ENCODE measurements at regions of chr12 and their contacts with region 1.

Region 1: GRCh38 chr12:93025145-93025805 is 96.2 kb upstream of the EEA1 start:
- DNase-seq: no peak
- ATAC-seq: peak; percentile 60 to 90 (median 70)
- H3K4me3 ChIP-seq: no peak overlapping the region
- H3K27ac ChIP-seq: no peak overlapping the region
- H3K4me1 ChIP-seq: peaks cover 6% of the 10 kb centered on the region
- H3K27me3 ChIP-seq: no peaks in the 10 kb centered on the region
- CTCF ChIP-seq: peak; percentile 55

Region 2: DNA sequence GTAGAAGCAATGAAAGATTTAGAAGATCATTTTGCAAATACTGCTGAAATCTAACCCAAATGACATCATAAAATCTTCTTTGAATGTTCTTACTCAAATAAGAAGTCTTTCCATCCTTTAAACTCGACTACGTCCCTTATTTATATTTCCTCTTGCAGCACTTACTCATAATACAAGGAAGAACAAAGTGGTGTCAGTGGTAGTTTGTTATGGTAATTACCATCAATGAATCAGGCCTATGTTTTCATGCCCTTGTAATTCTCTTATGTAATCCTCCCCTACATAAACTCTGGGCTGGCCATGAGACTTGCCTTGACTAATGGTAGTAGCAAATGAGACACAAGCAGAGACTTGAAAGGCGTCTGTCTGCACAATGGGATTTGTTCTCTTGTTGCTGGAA is 113.2 kb before region 1 on chr12:
- intact Hi-C with region 1: no loop called
- DNase-seq: no peak
- ATAC-seq: peak; percentile 66 to 82 (median 70)
- H3K4me3 ChIP-seq: no peak overlapping the region
- H3K27ac ChIP-seq: no peak overlapping the region
- H3K4me1 ChIP-seq: peaks cover 42% of the 10 kb centered on the region
- H3K27me3 ChIP-seq: no peaks in the 10 kb centered on the region
- CTCF ChIP-seq: no peak

Region 3: DNA sequence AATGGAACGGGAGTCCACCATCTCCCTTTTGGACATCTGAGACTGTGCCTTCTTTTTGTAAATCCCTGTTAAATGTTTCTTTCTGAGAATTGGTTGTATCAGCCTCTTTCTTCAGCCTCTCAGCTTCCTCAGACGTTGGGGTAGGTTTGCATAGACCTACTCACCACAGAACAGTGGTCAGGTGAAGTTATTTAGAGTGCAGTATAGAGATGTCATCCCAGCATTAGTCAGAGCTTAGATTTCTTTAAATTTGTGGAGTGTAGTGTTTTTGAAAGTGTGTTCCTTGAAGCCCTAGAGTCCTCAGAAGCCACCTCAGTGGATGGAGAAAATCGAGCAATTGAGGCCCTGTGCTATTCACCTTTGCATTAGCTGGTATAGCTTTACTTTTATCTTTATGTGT is 87.3 kb before region 1 on chr12:
- intact Hi-C with region 1: no loop called
- DNase-seq: no peak
- ATAC-seq: no peak
- H3K4me3 ChIP-seq: no peak overlapping the region
- H3K27ac ChIP-seq: no peak overlapping the region
- H3K4me1 ChIP-seq: no peaks in the 10 kb centered on the region
- H3K27me3 ChIP-seq: no peaks in the 10 kb centered on the region
- CTCF ChIP-seq: no peak

Region 4: DNA sequence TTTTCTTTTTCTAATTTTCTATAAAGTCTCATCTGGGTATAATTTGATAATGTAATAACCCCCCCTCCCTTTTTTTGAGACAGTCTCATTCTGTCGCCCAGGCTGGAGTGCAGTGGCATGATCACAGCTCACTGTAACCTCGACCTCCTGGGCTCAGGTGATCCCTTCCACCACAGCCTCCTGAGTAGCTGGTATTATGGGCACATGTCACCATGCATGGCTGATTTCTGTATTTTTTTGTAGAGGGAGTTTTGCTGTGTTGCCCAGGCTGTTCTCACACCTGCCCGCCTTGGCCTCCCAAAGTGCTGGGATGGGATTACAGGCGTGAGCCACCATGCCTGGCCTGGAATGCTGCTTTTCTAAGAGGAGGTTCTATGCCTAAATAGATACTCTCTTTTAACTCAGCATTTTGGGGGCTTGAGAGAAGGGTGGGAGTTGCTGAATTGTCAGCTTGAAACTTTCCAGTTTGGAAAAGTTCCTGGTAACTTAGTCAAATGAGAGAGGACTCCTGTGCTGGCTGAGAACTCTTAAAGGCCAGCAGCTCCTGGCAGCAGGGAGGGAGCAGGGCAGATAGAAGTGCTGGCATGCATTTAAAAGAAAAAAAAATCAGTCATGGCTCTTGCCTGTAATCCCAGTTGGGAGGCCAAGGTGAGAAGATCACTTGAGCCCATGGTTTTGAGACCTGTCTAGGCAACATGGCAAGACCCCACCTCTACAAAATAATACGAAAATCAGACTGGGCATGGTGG is 365.4 kb after region 1 on chr12:
- intact Hi-C with region 1: loop called in 1 of 2 experiments (anchors 10 kb)
- DNase-seq: no peak
- ATAC-seq: peak in 1 of 4 donors; percentile 29
- H3K4me3 ChIP-seq: no peak overlapping the region
- H3K27ac ChIP-seq: peak overlapping the region; percentile 55
- H3K4me1 ChIP-seq: peaks cover 64% of the 10 kb centered on the region
- H3K27me3 ChIP-seq: no peaks in the 10 kb centered on the region
- CTCF ChIP-seq: no peak

Region 5: GRCh38 chr12:93407054-93407962 is 382.0 kb after region 1 on chr12:
- intact Hi-C with region 1: no loop called
- DNase-seq: no peak
- ATAC-seq: peak in 1 of 4 donors; percentile 26
- H3K4me3 ChIP-seq: no peak overlapping the region
- H3K27ac ChIP-seq: peak overlapping the region; percentile 18
- H3K4me1 ChIP-seq: peaks cover 32% of the 10 kb centered on the region
- H3K27me3 ChIP-seq: no peaks in the 10 kb centered on the region
- CTCF ChIP-seq: no peak

Measured in psoas muscle (tissue), 8 donors.